ENCODE measurements at regions of chr21 and their contacts with region 1.

Region 1: GRCh38 chr21:38712071-38712470 is 93.7 kb upstream of the ETS2 start:
- DNase-seq: no peak
- H3K4me3 Mint-ChIP-seq: no peak overlapping the region
- H3K27ac Mint-ChIP-seq: no peak overlapping the region
- H3K4me1 Mint-ChIP-seq: no peaks in the 10 kb centered on the region
- H3K27me3 Mint-ChIP-seq: peaks cover 15% of the 10 kb centered on the region

Region 2: GRCh38 chr21:38505654-38506515 is 206.2 kb before region 1 on chr21:
- intact Hi-C with region 1: loop called (anchors 5 kb)
- DNase-seq: peak; percentile 81
- H3K4me3 Mint-ChIP-seq: no peak overlapping the region
- H3K27ac Mint-ChIP-seq: no peak overlapping the region
- H3K4me1 Mint-ChIP-seq: peaks cover 13% of the 10 kb centered on the region
- H3K27me3 Mint-ChIP-seq: peaks cover 19% of the 10 kb centered on the region

Region 3: DNA sequence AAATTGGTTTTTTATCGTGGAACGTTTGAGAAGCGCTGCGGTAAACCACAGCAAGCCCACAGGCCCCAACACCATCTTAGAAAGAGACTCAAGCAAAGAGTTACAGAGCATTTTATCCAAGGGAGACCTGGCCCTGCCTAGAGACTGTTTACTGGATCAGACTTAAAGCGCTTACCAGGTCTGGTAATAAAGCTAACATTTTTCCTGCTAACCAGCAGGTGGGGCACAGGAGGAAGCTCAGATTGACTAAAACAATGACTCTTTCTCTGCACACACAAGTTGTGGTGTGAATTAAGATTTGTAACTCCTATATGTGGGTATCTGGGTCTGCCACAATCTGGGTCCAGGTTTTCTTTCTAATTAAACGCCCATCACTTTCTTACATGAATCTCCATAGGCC is 42.9 kb before region 1 on chr21:
- intact Hi-C with region 1: no loop called
- DNase-seq: peak; percentile 58
- H3K4me3 Mint-ChIP-seq: no peak overlapping the region
- H3K27ac Mint-ChIP-seq: no peak overlapping the region
- H3K4me1 Mint-ChIP-seq: no peaks in the 10 kb centered on the region
- H3K27me3 Mint-ChIP-seq: peaks cover 23% of the 10 kb centered on the region

Measured in activated CD4-positive, alpha-beta T cell treated with anti-CD3 and anti-CD28 coated beads, Interleukin-2, amount 10 ng/mL, durations not matched to agents 24 days and 14 days (primary cell).